PC-9 (cell line): ENCODE measurements at regions of chr18 and their contacts with region 1.

Region 1: GRCh38 chr18:2932247-2933181 is 80.4 kb downstream of the LPIN2 start:
- DNase-seq: peak; percentile 32 to 52
- H3K4me3 ChIP-seq: no peak overlapping the region
- H3K27ac ChIP-seq: no peak overlapping the region
- H3K4me1 ChIP-seq: no peaks in the 10 kb centered on the region
- H3K27me3 ChIP-seq: no peaks in the 10 kb centered on the region
- CTCF ChIP-seq: peak; percentile 89

Region 2: GRCh38 chr18:3062798-3063680 is 130.5 kb after region 1 on chr18:
- CTCF ChIA-PET with region 1: no interaction called
- POLR2A ChIA-PET with region 1: no interaction called
- intact Hi-C with region 1: loop called (anchors 1 kb)
- DNase-seq: peak in 1 of 2 experiments; percentile 31
- H3K4me3 ChIP-seq: no peak overlapping the region
- H3K27ac ChIP-seq: no peak overlapping the region
- H3K4me1 ChIP-seq: peaks cover 17% of the 10 kb centered on the region
- H3K27me3 ChIP-seq: no peaks in the 10 kb centered on the region
- CTCF ChIP-seq: peak; percentile 68

Region 3: DNA sequence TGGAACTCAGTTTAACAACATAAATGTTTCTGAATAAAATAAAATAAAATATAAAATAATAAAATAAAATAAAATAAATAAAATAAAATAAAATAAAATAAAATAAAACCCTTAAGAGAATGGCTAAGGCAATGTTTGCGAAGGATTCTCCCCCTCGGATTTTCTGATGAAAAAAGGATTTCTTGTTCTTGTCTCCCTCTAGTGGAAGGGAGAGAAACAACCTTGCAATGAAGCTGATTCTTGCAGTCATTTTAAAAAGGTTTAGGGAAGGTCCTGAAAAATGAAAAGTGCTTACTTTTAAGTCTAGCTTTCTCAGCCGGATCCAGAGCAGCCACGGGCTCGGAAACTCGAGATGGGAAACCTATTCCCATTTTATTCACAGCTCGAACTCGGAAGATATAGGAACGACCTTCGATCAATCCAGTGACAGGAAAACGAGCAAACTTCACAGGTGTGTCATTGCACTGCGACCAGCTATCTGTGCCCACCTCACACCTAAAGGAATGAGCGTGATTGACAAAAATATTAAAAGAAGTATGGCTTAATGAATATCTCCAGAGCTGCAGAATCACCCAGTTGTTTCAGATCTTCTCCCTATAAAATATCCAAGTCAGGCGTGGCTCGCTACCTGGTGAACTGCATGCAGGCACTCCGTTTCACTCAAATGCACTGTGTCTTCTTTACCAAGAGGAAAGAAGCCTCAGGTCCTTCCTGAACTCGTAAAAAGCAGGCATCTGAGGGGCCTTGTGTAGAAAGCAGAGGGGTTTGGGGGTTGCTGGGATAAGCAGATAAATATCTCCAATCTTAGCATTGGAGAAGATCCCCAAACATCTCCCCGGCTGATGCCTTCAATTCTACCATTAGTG is 219.1 kb after region 1 on chr18:
- CTCF ChIA-PET with region 1: interaction called, 6 read pairs
- POLR2A ChIA-PET with region 1: no interaction called
- intact Hi-C with region 1: loop called (anchors 1 kb)
- DNase-seq: no peak
- H3K4me3 ChIP-seq: no peak overlapping the region
- H3K27ac ChIP-seq: no peak overlapping the region
- H3K4me1 ChIP-seq: peaks cover 9% of the 10 kb centered on the region; the same call in 1 of the 2 replicates
- H3K27me3 ChIP-seq: no peaks in the 10 kb centered on the region
- CTCF ChIP-seq: peak; percentile 91

Region 4: DNA sequence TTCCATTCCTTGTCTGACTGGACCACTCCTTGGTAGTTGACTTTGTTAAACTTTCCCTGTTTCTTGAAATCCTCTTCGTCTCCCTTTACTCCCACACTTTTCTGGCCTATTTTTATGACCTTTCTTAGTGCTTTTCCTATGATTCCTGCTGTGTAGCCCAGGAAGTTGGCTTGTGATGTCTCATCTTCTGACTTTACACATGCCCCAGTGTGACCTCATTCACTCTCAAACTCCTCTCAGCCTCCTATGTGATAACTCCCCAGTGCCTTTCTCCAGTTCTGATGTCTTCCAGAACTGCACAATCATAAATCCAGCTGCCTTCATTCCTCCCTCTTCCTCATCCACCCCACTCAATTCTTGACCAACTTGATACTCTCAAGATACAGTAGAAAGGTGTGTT is 925.0 kb after region 1 on chr18:
- CTCF ChIA-PET with region 1: no interaction called
- POLR2A ChIA-PET with region 1: no interaction called
- intact Hi-C with region 1: no loop called
- DNase-seq: no peak
- H3K4me3 ChIP-seq: no peak overlapping the region
- H3K27ac ChIP-seq: no peak overlapping the region
- H3K4me1 ChIP-seq: no peaks in the 10 kb centered on the region
- H3K27me3 ChIP-seq: no peaks in the 10 kb centered on the region
- CTCF ChIP-seq: no peak

Region 5: GRCh38 chr18:3869848-3870247 is 937.3 kb after region 1 on chr18:
- CTCF ChIA-PET with region 1: no interaction called
- POLR2A ChIA-PET with region 1: no interaction called
- intact Hi-C with region 1: loop called (anchors 10 kb)
- DNase-seq: no peak
- H3K4me3 ChIP-seq: no peak overlapping the region
- H3K27ac ChIP-seq: no peak overlapping the region
- H3K4me1 ChIP-seq: no peaks in the 10 kb centered on the region
- H3K27me3 ChIP-seq: no peaks in the 10 kb centered on the region
- CTCF ChIP-seq: peak; percentile 78